ENCODE measurements at regions of chr7 and their contacts with region 1.

Region 1: GRCh38 chr7:50212666-50213621 is 91.6 kb upstream of the IKZF1 start:
- DNase-seq: no peak
- ATAC-seq: peak; percentile 91
- H3K4me3 Mint-ChIP-seq: peak overlapping the region; percentile 70
- H3K27ac Mint-ChIP-seq: peak overlapping the region; percentile 84
- H3K4me1 Mint-ChIP-seq: peaks cover 63% of the 10 kb centered on the region
- H3K27me3 Mint-ChIP-seq: no peaks in the 10 kb centered on the region
- CTCF ChIP-seq: no peak

Region 2: GRCh38 chr7:50022991-50023390 is 190.0 kb before region 1 on chr7:
- CTCF ChIA-PET with region 1: no interaction called
- POLR2A ChIA-PET with region 1: no interaction called
- intact Hi-C with region 1: no loop called
- DNase-seq: no peak
- ATAC-seq: no peak
- H3K4me3 Mint-ChIP-seq: no peak overlapping the region
- H3K27ac Mint-ChIP-seq: no peak overlapping the region
- H3K4me1 Mint-ChIP-seq: no peaks in the 10 kb centered on the region
- H3K27me3 Mint-ChIP-seq: peaks cover 24% of the 10 kb centered on the region
- CTCF ChIP-seq: no peak

Region 3: DNA sequence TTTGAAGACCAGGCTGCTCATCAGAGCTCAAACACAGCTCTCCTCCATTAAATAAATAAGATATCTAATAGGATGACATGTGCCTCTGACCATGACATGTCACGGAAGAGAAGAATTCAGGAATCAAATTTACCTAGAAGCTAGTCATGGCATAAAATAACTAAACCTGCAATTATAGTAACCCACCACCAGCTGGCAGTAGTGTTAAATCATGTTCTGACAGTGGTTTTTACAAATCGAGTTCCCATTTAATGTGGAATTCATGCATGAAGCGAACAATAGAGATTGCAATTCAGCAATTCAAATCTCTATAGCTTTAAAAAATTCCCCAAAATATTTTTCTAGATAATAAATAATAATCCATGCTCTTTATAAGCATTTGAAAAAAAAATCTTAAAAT is 17.0 kb after region 1 on chr7:
- CTCF ChIA-PET with region 1: interaction called, 4 read pairs
- POLR2A ChIA-PET with region 1: interaction called, 3 read pairs
- intact Hi-C with region 1: loop called (anchors 2 kb)
- DNase-seq: no peak
- ATAC-seq: no peak
- H3K4me3 Mint-ChIP-seq: no peak overlapping the region
- H3K27ac Mint-ChIP-seq: no peak overlapping the region
- H3K4me1 Mint-ChIP-seq: peaks cover 5% of the 10 kb centered on the region
- H3K27me3 Mint-ChIP-seq: no peaks in the 10 kb centered on the region
- CTCF ChIP-seq: no peak

Region 4: DNA sequence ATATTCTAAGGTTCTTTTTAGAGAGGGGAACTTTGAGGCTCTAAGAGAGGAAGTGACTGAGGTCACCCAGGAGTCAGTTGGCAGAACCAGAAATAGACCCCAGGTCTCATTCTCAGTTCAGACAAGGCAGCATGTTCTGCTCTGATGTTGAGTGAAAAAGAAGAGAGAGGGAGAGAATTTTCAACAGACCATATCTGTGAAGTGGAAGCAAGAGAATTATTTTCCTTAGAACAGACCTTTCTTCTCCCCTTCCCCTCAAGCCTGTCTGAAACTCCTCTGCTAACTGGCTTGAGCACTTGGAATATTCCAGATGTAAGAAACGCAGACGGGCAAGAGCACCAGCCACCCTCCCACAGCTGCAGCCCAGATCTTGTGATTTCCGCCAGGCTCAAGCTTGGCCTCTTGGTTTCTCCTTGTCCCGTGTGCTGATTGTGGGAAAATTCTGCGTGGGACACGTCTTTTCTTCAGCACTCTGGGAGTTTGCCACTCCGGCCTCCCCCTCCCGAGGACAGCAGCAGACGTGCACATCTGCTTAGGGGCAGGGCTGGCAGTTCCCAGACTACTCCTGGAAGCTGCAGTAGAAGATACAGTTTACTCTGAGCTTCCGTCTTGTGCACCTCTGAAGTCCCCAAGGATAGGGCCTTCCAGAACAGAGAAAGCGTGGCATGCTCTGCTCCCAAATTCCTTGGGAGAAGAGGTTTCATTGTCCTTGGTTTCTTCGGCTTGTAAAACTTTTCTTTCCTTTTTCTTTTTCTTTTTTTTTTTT is 68.9 kb after region 1 on chr7:
- CTCF ChIA-PET with region 1: no interaction called
- POLR2A ChIA-PET with region 1: no interaction called
- intact Hi-C with region 1: loop called (anchors 1 kb)
- DNase-seq: no peak
- ATAC-seq: peak; percentile 89
- H3K4me3 Mint-ChIP-seq: peak overlapping the region; percentile 84
- H3K27ac Mint-ChIP-seq: peak overlapping the region; percentile 94
- H3K4me1 Mint-ChIP-seq: peaks cover 83% of the 10 kb centered on the region
- H3K27me3 Mint-ChIP-seq: no peaks in the 10 kb centered on the region
- CTCF ChIP-seq: no peak

Region 5: GRCh38 chr7:50317221-50317678 is 104.3 kb after region 1 on chr7:
- CTCF ChIA-PET with region 1: interaction called, 3 read pairs
- POLR2A ChIA-PET with region 1: interaction called, 10 read pairs
- intact Hi-C with region 1: no loop called
- DNase-seq: no peak
- ATAC-seq: peak; percentile 63
- H3K4me3 Mint-ChIP-seq: peak overlapping the region; percentile 74
- H3K27ac Mint-ChIP-seq: peak overlapping the region; percentile 96
- H3K4me1 Mint-ChIP-seq: peaks cover 96% of the 10 kb centered on the region
- H3K27me3 Mint-ChIP-seq: no peaks in the 10 kb centered on the region
- CTCF ChIP-seq: no peak

Region 6: GRCh38 chr7:50369143-50370026 is 156.4 kb after region 1 on chr7:
- CTCF ChIA-PET with region 1: interaction called, 104 read pairs
- POLR2A ChIA-PET with region 1: interaction called, 7 read pairs
- intact Hi-C with region 1: loop called (anchors 1 kb)
- DNase-seq: no peak
- ATAC-seq: peak; percentile 66
- H3K4me3 Mint-ChIP-seq: no peak overlapping the region
- H3K27ac Mint-ChIP-seq: peak overlapping the region; percentile 74
- H3K4me1 Mint-ChIP-seq: peaks cover 94% of the 10 kb centered on the region
- H3K27me3 Mint-ChIP-seq: no peaks in the 10 kb centered on the region
- CTCF ChIP-seq: peak; percentile 50

Measured in activated B cell treated with CpG ODN at 0.5 μM for 24 hours (primary cell).